Dorsolateral prefrontal cortex (tissue), 120 donors: ENCODE measurements at regions of chr1 and their contacts with region 1.

Region 1: GRCh38 chr1:176897350-176898236 is 266.9 kb downstream of the ASTN1 start:
- DNase-seq: peak; percentile 60 to 76 (median 72)
- H3K4me3 ChIP-seq: peak overlapping the region in 55 of 59 donors; percentile 2 to 66 (median 35)
- H3K27ac ChIP-seq: peak overlapping the region in 23 of 59 donors; percentile 2 to 67 (median 30)
- H3K27me3 ChIP-seq: no peaks in the 10 kb centered on the region
- CTCF ChIP-seq: peak; percentile 34 to 92 (median 76)

Region 2: GRCh38 chr1:177170756-177171535 is 273.4 kb after region 1 on chr1 and contains the start of gene BRINP2:
- intact Hi-C with region 1: loop called in 1 of 2 experiments (anchors 5 kb)
- DNase-seq: peak; percentile 72 to 95 (median 93)
- H3K4me3 ChIP-seq: peak within 1 kb of the TSS; percentile 51 to 97 (median 84)
- H3K27ac ChIP-seq: peak within 1 kb of the TSS in 57 of 59 donors; percentile 7 to 91 (median 75)
- H3K27me3 ChIP-seq: no peaks in the 10 kb centered on the region
- CTCF ChIP-seq: peak in 30 of 56 donors; percentile 9 to 48 (median 20)
- total RNA-seq, gene BRINP2: 23.4 to 88.2 (median 57.5) TPM

Region 3: DNA sequence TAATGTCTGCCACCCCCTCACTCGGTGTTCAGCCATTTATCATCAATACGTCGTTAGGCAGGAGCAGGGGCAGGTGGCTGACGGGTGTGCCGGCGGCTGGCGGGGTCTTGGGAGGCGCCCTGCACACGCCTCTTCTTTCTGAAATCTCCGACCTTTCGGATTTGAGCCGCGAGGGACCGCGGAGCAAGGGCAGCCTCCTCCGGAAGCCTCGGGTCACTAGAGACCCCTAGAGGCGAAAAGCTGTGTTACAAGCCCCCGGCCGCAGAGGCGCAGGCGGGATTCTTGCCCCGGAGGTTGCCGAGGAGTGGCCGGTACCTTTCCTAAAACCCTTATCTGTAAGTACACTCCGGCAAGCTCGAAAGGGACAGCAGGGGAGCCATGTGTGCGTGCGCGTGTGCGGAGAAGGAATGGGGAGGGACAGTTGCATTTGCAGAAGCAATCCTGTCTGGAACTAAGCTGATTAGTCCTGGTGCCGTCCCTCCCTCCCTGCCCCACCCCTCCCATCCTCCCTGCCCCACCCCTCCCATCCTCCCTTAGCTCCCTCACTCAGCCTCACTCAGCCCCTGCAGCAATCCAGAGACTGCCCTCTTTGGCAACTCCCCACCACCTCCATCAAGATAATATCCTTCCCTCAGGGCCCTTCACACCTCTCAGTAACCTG is 284.2 kb after region 1 on chr1:
- intact Hi-C with region 1: loop called in 1 of 2 experiments (anchors 1 kb)
- DNase-seq: peak; percentile 55 to 81 (median 64)
- H3K4me3 ChIP-seq: peak overlapping the region; percentile 12 to 71 (median 52)
- H3K27ac ChIP-seq: peak overlapping the region in 54 of 59 donors; percentile 2 to 88 (median 69)
- H3K27me3 ChIP-seq: no peaks in the 10 kb centered on the region
- CTCF ChIP-seq: peak in 55 of 56 donors; percentile 59 to 95 (median 86)

Region 4: DNA sequence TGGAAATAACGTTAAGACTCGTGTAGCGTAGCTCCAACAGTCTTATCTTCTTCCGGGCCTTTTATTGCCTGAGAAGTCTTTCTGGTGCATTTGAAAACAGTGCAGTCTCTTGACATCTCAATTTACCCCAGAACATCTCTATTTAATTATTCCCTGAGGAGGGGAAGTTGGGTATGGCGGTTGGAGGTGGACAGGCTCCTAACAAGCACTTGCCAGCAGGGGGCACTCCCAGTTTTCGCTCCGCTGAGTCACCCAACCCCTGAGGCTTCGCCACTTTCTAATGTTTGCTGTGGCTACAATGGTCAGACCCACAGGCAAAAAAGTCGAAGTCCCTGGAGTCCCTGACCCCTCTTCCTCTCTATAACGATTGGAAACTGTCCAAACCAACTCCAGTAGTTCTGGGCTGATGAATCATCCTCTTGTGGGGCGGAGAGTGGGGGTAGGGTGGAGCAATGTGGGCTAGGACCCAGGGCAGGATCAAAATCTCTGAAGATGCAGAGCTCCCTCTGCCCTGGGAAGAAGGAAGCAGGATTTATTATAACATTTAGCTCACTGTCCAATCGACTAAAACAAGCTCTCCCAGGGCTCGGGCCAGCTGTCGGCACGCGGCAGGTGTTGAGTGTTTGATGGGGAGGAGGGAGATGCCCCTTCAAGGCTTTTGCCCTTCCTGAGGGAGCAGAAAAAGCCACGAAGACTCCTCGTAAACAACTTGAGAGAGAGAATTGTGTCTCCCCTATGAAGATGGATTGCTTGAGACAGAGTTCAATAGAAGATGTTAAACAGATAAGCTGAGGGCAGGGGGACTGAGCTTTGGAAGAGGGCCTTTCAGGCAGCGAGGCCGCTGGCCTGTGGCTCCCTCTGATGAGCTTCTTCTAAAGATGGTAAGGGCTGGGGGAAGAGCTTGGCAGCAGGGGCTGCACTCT is 358.8 kb after region 1 on chr1:
- intact Hi-C with region 1: loop called in 1 of 2 experiments (anchors 10 kb)
- DNase-seq: peak in 9 of 10 donors; percentile 55 to 75 (median 65)
- H3K4me3 ChIP-seq: no peak overlapping the region
- H3K27ac ChIP-seq: peak overlapping the region in 37 of 59 donors; percentile 14 to 78 (median 48)
- H3K27me3 ChIP-seq: no peaks in the 10 kb centered on the region
- CTCF ChIP-seq: peak; percentile 28 to 91 (median 72)

Region 5: DNA sequence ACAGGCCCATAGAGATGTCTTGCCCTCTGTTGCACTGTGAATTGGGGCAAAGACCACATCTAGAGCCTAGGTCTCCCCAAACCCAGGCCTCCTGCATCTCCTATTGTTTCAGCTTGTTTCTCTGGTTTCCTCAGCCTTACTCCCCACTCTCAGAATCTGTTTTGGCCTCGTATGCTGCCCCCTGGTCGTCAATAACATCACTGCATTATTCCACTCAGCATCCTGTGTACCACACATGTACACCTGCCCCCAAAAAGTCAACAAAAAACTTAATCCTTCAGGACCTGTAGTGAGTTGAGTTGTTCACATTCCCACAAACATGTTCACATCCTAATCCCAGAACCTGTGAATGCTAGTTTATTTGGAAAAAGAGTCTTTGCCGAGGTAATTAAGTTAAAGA is 458.0 kb after region 1 on chr1:
- intact Hi-C with region 1: loop called in 1 of 2 experiments (anchors 5 kb)
- DNase-seq: peak in 6 of 10 donors; percentile 20 to 65 (median 37)
- H3K4me3 ChIP-seq: no peak overlapping the region
- H3K27ac ChIP-seq: peak overlapping the region in 16 of 59 donors; percentile 3 to 73 (median 48)
- H3K27me3 ChIP-seq: no peaks in the 10 kb centered on the region
- CTCF ChIP-seq: peak in 54 of 56 donors; percentile 34 to 81 (median 57)

Region 6: DNA sequence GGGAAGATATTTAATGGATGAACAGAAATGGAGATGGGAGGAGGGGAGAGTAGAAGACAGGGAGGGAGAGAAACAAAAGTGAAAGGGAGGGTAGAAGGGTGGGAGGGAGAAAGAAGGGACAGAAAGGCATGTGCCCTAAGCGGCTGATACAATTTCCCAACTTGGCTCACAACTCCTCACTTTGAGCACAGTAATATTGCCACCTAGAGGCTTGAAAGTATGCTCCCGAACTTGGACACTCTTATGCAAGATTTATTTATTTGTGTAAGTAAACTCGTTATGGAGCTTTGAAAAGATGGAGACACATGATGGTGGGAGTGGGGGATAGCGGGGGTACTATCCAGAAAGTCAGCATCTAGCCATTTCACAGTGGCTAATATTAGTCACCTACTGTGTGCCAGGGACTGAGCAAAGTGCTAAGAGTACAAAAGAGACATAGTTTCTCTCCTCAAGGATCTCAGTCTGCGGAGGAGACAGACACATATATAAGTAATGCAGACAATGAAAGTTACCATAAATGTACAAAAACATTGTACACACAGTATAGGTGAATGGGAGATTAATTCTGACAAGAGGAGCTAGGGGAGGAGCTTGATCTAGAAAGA is 882.6 kb after region 1 on chr1:
- intact Hi-C with region 1: loop called (anchors 5 kb)
- DNase-seq: peak in 1 of 10 donors; percentile 45
- H3K4me3 ChIP-seq: no peak overlapping the region
- H3K27ac ChIP-seq: no peak overlapping the region
- H3K27me3 ChIP-seq: no peaks in the 10 kb centered on the region
- CTCF ChIP-seq: peak; percentile 46 to 78 (median 65)

Region 7: GRCh38 chr1:177948336-177948972 is 1050.9 kb after region 1 on chr1:
- intact Hi-C with region 1: loop called (anchors 1 to 5 kb)
- DNase-seq: peak in 7 of 10 donors; percentile 45 to 78 (median 60)
- H3K4me3 ChIP-seq: no peak overlapping the region
- H3K27ac ChIP-seq: peak overlapping the region in 1 of 59 donors; percentile 9
- H3K27me3 ChIP-seq: no peaks in the 10 kb centered on the region
- CTCF ChIP-seq: peak; percentile 78 to 97 (median 92)